Posterior cingulate gyrus (tissue), 11 donors: ENCODE measurements at regions of chr17 and their contacts with region 1.

Region 1: GRCh38 chr17:76547184-76547641 is 7.4 kb downstream of the PRCD start:
- DNase-seq: peak in 8 of 10 donors; percentile 61 to 93 (median 76)

Region 2: GRCh38 chr17:76383546-76384221 is 163.5 kb before region 1 on chr17:
- intact Hi-C with region 1: no loop called
- DNase-seq: no peak

Region 3: GRCh38 chr17:76506408-76507349 is 40.5 kb before region 1 on chr17:
- intact Hi-C with region 1: no loop called
- DNase-seq: peak; percentile 76 to 98 (median 92)

Region 4: DNA sequence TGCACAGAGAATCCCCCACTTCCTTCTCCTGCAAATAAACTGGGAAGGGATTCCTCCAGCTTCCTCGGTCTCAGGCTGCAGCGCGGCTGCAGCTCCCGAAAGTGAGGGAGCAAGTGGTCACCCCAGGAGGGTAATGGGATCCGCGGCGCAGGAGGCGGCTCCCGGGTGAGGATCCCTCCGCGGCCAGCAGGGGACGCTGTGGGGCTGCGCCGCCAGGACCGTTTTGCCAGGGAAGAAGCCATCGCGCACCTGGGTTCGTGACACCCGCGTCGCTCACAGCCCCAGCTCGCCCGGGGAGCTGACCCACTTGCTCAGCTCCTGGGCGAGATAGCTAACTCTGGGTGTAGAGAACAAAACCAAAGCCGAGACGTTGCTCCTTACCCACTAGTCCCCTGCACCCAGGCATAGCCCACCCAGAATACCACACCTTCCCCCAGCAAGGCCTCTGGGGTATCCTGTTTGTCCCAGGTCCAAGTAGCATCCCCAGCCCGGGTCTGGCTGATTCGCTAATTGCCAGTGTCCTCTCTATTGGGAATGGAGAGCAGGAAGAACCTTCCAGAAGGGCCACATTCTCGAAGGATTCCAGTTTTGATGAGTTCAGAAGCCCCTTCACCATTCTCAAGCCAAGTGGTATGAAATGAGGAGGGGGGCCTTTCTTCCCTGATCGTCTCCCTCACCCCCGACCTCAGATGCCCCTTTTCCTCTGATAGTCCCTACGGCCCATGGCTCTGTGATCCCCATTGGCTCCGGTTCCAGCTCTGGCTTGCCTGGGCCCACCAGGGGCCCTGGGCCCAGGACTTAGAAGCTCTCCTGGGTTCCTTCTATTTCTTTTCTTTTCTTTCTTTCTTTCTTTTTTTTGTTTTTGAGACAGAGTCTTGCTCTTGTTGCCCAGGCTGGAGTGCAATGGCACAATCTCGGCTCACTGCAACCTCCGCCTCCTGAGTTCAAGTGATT is 23.9 kb before region 1 on chr17:
- intact Hi-C with region 1: loop called (anchors 1 kb)
- DNase-seq: peak in 9 of 10 donors; percentile 68 to 96 (median 80)

Region 5: GRCh38 chr17:76597728-76598474 is 50.7 kb after region 1 on chr17:
- intact Hi-C with region 1: no loop called
- DNase-seq: peak in 6 of 10 donors; percentile 15 to 88 (median 34)